Activated CD8-positive, alpha-beta T cell treated with anti-CD3 and anti-CD28 coated beads for 36 hours (primary cell): ENCODE measurements at regions of chr1 and their contacts with region 1.

Region 1: DNA sequence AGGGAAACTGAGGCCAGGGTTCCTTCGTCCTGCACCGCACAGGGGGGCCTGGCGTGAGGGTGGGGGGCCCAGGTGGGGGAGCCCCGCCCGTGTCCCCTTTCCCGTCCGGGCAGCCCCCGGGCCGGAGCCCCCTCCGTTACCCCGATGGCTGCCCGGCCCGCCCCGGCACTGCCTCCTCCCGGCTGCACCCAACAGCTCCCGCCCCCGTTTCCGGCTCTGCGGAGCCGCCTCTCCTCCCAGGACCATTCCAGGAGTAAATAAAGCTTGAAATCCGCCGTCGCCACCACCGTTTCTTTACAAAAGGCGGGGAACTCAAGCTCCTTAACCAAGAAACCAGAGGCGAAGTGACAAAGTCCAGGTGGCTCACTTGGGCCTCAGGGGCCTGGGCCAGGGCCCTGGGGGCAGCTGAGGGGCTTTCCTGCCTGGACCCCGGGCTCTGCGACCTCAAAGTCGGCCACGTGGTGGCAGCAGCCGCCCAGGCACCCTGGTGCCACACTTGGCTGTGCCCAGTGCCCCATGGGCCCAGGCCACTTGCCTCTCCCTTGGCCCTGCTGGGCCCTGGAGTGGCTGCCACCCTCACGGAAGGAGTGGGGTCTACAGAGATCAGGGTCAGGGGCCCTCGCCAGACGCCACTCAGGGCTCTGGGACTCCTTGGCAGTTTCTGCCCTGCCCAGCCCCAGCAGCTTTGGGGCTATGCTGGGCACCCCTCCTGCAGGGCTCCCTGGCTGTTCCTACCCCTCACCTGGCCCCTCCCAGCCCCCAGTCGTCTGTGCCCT is 514 bp upstream of the FAAP20 start:
- DNase-seq: peak; percentile 93
- ATAC-seq: peak; percentile 69
- H3K4me3 Mint-ChIP-seq: peak overlapping the region; percentile 83
- H3K27ac Mint-ChIP-seq: peak overlapping the region; percentile 96
- H3K4me1 Mint-ChIP-seq: peaks cover 33% of the 10 kb centered on the region
- H3K27me3 Mint-ChIP-seq: no peaks in the 10 kb centered on the region
- CTCF ChIP-seq: peak; percentile 97

Region 2: DNA sequence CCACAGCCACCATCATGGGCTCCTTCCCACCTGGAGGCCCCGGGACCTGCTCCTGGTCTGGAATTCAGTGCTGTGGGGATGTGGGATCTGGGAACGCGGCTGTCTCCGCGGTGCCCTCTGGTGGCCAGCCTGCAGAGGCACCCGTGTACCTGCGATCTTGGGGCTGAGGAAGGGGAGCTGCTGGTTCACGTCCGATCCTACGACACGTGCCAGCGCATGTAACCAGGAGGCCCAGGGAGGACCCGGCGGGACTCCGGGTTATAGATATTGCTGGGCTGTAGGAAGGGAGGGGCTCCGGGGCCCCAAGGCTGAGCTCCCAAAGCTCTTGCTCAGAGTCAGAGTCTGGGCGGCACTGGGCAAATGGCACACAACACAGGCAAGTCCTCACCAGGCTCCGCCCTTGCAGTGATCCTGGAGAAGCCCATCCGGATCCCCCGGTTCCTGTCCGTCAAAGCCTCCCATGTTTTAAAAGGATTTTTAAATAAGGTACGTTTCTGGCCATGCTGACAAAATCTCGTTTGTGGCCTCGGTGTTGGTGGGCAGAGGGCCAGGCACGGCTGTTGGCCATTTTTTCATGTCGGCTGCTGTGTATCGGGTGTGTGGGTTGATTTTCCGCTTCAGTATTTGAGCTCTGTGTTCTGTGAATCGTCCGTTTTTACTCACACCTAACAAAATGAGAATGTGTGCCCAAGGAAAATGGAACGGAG is 20.6 kb before region 1 on chr1:
- CTCF ChIA-PET with region 1: interaction called, 11 read pairs
- POLR2A ChIA-PET with region 1: no interaction called
- intact Hi-C with region 1: no loop called
- DNase-seq: peak; percentile 46
- ATAC-seq: peak; percentile 75
- H3K4me3 Mint-ChIP-seq: peak overlapping the region; percentile 38
- H3K27ac Mint-ChIP-seq: peak overlapping the region; percentile 20
- H3K4me1 Mint-ChIP-seq: peaks cover 3% of the 10 kb centered on the region
- H3K27me3 Mint-ChIP-seq: no peaks in the 10 kb centered on the region
- CTCF ChIP-seq: peak; percentile 90

Region 3: DNA sequence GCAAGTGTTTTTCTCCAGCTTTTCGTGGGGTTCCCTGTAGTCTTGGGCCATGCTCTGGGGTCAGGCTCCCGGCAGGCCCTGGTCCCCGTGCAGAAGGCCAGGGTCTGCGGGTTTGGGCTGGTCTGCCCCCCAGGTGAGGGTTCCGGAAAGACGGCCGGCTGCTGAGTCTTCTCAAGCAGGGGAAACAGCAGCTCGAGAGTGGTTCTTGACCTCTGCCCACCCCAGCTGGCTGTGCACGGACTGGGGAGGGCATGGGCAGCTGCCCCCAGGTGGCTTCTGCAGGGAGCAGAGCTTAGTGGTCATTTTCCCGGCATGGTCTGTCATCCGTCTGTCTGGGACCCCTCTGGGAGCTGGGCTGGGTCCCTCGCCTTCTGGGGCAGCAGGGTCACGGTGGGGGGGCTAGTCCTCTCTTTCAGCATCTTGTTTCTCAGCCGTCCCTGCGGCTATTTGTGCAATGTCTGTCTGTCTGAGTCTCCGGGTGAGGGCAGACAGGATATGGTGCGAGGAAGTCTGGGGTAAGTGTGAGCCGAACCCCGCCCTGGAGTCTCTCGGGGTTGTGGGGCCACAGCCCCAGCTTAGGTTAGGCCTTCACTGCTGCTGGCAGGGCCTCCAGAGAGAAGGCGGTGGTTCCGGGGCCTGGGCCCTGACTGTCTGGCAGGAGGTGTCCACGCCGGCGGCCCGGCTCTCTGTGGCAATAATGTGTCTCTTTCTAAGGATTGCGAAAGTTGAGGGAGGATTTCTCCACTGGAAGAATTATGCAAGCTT is 39.1 kb after region 1 on chr1:
- CTCF ChIA-PET with region 1: interaction called, 21 read pairs
- POLR2A ChIA-PET with region 1: interaction called, 19 read pairs
- intact Hi-C with region 1: no loop called
- DNase-seq: peak; percentile 88
- ATAC-seq: peak; percentile 82
- H3K4me3 Mint-ChIP-seq: peak overlapping the region; percentile 73
- H3K27ac Mint-ChIP-seq: peak overlapping the region; percentile 92
- H3K4me1 Mint-ChIP-seq: peaks cover 60% of the 10 kb centered on the region
- H3K27me3 Mint-ChIP-seq: no peaks in the 10 kb centered on the region
- CTCF ChIP-seq: no peak

Region 4: DNA sequence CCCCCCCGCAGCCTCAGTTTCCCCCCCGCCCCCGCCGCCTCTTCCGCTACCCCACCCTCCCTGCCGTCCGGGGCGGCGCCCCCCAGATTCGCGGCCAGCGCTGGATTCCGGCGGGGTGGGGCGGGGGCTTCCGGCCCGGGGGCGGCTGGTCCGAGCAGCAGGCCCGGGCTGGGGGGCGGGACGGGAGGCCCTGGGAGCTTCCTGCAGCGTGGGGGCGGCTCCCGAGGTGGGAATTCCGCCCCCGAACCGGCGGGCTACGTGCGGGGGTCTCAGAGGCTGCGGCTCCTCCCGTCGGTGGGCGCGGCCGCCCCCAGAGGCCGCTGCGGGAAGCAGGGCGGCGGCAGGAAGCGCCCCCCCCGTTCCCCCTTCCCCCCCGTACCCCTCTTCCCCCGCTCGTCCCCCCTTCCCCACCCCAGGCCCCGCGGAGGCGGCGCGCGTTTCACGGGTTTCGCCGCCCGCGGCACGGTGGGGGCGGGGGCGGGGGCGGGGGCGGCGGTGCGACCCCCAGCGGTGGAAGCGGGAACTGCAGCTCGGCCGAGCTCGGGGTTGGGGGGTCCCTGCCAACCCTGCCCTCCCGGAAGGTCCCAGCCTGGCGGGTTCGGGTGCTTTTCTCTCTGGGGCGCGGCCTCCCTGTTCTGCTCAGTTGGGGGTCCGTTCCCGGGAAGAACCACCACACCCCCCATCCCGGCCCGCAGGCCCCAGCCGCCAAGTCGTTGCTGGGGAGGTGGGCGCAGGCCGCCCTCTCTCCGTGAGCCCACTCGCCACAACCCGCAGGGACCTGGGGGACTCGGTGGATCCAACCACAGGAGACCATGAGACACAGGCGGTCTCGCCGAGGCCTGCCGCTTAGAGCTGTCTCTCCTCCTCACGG is 120.0 kb after region 1 on chr1:
- CTCF ChIA-PET with region 1: interaction called, 18 read pairs
- POLR2A ChIA-PET with region 1: interaction called, 6 read pairs
- intact Hi-C with region 1: no loop called
- DNase-seq: peak; percentile 56
- ATAC-seq: peak; percentile 46
- H3K4me3 Mint-ChIP-seq: peak overlapping the region; percentile 15
- H3K27ac Mint-ChIP-seq: no peak overlapping the region
- H3K4me1 Mint-ChIP-seq: peaks cover 20% of the 10 kb centered on the region
- H3K27me3 Mint-ChIP-seq: no peaks in the 10 kb centered on the region
- CTCF ChIP-seq: peak; percentile 99

Region 5: GRCh38 chr1:2391041-2391930 is 196.2 kb after region 1 on chr1 and contains the starts of genes MORN1 and RER1:
- CTCF ChIA-PET with region 1: interaction called, 35 read pairs
- POLR2A ChIA-PET with region 1: interaction called, 4 read pairs
- intact Hi-C with region 1: no loop called
- DNase-seq: peak; percentile 99
- ATAC-seq: peak; percentile 99
- H3K4me3 Mint-ChIP-seq: peak within 1 kb of the TSS; percentile 92
- H3K27ac Mint-ChIP-seq: peak within 1 kb of the TSS; percentile 90
- H3K4me1 Mint-ChIP-seq: peaks cover 39% of the 10 kb centered on the region
- H3K27me3 Mint-ChIP-seq: no peaks in the 10 kb centered on the region
- CTCF ChIP-seq: no peak
- total RNA-seq, gene MORN1: 5.9 to 6.6 TPM
- total RNA-seq, gene RER1: 120 to 131 TPM